PC-9 (cell line): ENCODE measurements at regions of chr11 and their contacts with region 1.

Region 1: GRCh38 chr11:69642913-69643632 is 2.1 kb downstream of the CCND1 start:
- DNase-seq: peak; percentile 66 to 83
- H3K4me3 ChIP-seq: peak overlapping the region; percentile 99
- H3K27ac ChIP-seq: peak overlapping the region; percentile 85
- H3K4me1 ChIP-seq: peaks cover 22% of the 10 kb centered on the region
- H3K27me3 ChIP-seq: no peaks in the 10 kb centered on the region
- CTCF ChIP-seq: peak; percentile 91

Region 2: GRCh38 chr11:69122642-69123431 is 520.2 kb before region 1 on chr11:
- CTCF ChIA-PET with region 1: no interaction called
- POLR2A ChIA-PET with region 1: no interaction called
- intact Hi-C with region 1: loop called (anchors 1 kb)
- DNase-seq: peak; percentile 99 to 100
- H3K4me3 ChIP-seq: peak overlapping the region; percentile 43; the same call in 1 of the 2 replicates
- H3K27ac ChIP-seq: peak overlapping the region; percentile 96
- H3K4me1 ChIP-seq: peaks cover 42% of the 10 kb centered on the region
- H3K27me3 ChIP-seq: no peaks in the 10 kb centered on the region
- CTCF ChIP-seq: no peak

Region 3: GRCh38 chr11:69376861-69377595 is 266.0 kb before region 1 on chr11:
- CTCF ChIA-PET with region 1: no interaction called
- POLR2A ChIA-PET with region 1: interaction called, 4 read pairs
- intact Hi-C with region 1: loop called (anchors 1 kb)
- DNase-seq: peak in 1 of 2 experiments; percentile 51
- H3K4me3 ChIP-seq: no peak overlapping the region
- H3K27ac ChIP-seq: peak overlapping the region; percentile 31
- H3K4me1 ChIP-seq: peaks cover 22% of the 10 kb centered on the region
- H3K27me3 ChIP-seq: no peaks in the 10 kb centered on the region
- CTCF ChIP-seq: no peak

Region 4: GRCh38 chr11:69419662-69420395 is 223.2 kb before region 1 on chr11:
- CTCF ChIA-PET with region 1: no interaction called
- POLR2A ChIA-PET with region 1: interaction called, 3 read pairs
- intact Hi-C with region 1: loop called (anchors 1 kb)
- DNase-seq: no peak
- H3K4me3 ChIP-seq: no peak overlapping the region; the same call in 1 of the 2 replicates
- H3K27ac ChIP-seq: peak overlapping the region; percentile 89
- H3K4me1 ChIP-seq: peaks cover 28% of the 10 kb centered on the region
- H3K27me3 ChIP-seq: no peaks in the 10 kb centered on the region
- CTCF ChIP-seq: no peak

Region 5: DNA sequence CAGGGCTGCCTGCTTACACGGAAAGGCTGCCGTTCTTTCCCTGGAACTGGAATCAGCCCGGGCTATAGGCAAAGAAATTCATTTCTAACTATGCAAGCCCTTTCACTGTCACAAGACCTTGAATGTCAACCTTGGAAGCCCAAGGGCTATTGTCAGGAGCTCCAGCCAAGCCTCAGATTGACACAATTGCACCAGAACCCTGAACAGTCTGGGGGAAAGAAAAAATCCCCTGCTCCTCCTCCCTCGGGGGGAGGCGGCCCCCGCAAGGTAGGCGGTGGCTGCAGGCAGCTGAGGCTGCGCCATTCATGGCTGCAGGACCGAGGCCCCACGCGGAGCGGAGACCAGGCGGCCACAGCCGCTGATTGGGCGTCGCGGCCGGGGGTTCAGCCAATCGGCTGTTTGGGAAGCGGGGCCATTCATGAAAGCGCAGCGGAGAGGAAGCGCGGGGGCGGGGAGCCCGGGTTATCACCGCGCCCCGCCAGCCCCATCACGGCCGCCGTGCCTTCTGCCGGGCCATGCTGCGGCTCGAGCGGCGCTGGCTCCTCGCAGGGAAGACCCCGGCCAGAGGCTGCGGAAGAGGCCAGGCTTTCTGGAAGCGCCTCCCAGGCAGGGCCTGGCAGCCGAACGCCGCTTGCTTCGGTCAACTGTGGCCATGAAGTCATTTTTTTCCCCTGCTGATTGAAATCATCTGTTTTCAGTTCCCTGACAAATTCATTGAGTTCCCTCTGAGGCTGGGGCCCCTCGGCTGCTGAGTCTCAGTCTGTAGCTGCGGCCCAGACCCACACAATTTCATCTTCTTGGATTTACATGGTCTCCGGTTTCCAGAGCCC is 199.7 kb before region 1 on chr11:
- CTCF ChIA-PET with region 1: interaction called, 3 read pairs
- POLR2A ChIA-PET with region 1: interaction called, 3 read pairs
- intact Hi-C with region 1: loop called (anchors 1 kb)
- DNase-seq: peak; percentile 90 to 97
- H3K4me3 ChIP-seq: peak overlapping the region; percentile 58
- H3K27ac ChIP-seq: peak overlapping the region; percentile 88
- H3K4me1 ChIP-seq: peaks cover 56% of the 10 kb centered on the region
- H3K27me3 ChIP-seq: no peaks in the 10 kb centered on the region
- CTCF ChIP-seq: no peak

Region 6: DNA sequence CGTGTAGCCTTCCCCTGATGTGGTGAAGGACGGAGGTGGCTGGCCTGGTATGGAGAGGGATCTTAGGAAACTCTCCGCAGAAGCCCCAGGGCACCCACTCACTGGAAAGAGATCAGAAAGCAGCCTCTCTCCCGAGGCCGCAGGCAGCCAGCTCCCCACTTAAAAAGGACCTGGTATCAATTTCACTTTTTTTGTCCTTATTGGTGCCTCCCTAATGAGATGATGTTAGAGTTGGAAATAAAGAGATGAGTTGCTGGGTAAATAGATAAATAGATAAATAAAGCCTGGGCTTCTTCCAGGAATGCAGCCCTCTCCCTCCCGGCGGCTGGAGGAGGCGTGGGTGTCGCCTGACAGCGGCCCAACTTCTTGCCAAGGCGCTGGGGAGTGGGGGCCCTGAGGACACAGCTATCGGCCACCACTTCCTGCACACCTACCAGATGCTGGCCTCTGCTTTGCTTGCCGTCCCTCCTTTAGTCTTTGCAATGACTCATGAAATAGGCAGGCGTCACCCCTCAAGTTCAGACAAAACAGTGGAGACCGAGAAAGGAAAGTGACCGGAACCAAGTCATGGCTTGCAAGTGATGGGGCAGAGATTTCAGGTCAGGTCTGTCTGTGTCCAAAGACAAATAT is 118.7 kb before region 1 on chr11:
- CTCF ChIA-PET with region 1: interaction called, 6 read pairs
- POLR2A ChIA-PET with region 1: interaction called, 6 read pairs
- intact Hi-C with region 1: loop called (anchors 1 kb)
- DNase-seq: peak in 1 of 2 experiments; percentile 89
- H3K4me3 ChIP-seq: no peak overlapping the region
- H3K27ac ChIP-seq: no peak overlapping the region
- H3K4me1 ChIP-seq: no peaks in the 10 kb centered on the region
- H3K27me3 ChIP-seq: peaks cover 5% of the 10 kb centered on the region; the same call in 1 of the 2 replicates
- CTCF ChIP-seq: no peak

Region 7: GRCh38 chr11:70675697-70676374 is 1032.8 kb after region 1 on chr11:
- CTCF ChIA-PET with region 1: no interaction called
- POLR2A ChIA-PET with region 1: no interaction called
- intact Hi-C with region 1: no loop called
- DNase-seq: peak in 1 of 2 experiments; percentile 47
- H3K4me3 ChIP-seq: no peak overlapping the region
- H3K27ac ChIP-seq: no peak overlapping the region
- H3K4me1 ChIP-seq: no peaks in the 10 kb centered on the region
- H3K27me3 ChIP-seq: no peaks in the 10 kb centered on the region
- CTCF ChIP-seq: no peak